Panc1 (cell line): ENCODE measurements at regions of chr1 and their contacts with region 1.

Region 1: GRCh38 chr1:226547754-226548191 is 791 bp upstream of the STUM start:
- DNase-seq: peak; percentile 71
- ATAC-seq: peak; percentile 89
- H3K4me3 ChIP-seq: no peak overlapping the region
- H3K27ac ChIP-seq: no peak overlapping the region
- H3K4me1 ChIP-seq: peaks cover 9% of the 10 kb centered on the region
- H3K27me3 ChIP-seq: peaks cover 29% of the 10 kb centered on the region
- CTCF ChIP-seq: peak; percentile 99

Region 2: DNA sequence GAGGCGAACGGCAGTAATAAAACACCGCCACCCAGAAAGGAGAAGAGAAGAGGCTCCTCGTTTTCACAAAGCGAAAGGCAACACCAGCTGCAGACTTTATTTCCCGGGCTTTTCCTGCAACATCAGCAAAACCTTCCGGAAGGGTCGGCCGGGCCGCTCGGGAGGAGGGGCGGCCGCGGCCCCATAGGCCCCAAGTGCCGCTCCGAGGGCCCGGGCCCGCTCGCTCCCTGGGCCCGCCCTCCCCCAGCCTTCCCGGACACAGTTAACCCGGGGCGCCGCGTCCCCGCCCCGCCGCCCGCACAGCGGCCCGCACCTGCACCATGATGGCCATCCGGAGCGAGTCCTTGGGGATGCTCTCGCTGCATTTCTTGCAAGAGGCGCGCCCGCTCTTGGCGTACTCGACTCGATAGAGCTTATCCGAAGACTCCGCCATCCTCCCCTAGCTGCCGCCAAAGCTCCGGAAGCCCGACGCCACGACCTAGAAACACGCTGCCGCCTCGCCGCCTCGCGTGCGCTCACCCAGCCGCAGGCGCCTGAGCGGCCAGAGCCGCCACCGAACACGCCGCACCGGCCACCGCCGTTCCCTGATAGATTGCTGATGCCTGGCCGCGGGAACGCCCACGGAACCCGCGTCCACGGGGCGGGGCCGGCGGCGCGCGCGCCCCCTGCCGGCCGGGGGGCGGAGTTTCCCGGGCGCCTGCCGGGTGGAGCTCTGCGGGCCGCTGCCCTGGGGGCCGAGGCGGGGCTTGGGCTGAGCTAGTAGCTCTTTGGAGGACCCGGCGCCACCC is 140.1 kb before region 1 on chr1 and contains the start of gene PARP1:
- CTCF ChIA-PET with region 1: interaction called, 10 read pairs
- POLR2A ChIA-PET with region 1: no interaction called
- in situ Hi-C with region 1: no loop called
- intact Hi-C with region 1: no loop called
- DNase-seq: no peak
- ATAC-seq: peak; percentile 94
- H3K4me3 ChIP-seq: peak within 1 kb of the TSS; percentile 76 to 94
- H3K27ac ChIP-seq: peak within 1 kb of the TSS; percentile 84
- H3K4me1 ChIP-seq: peaks cover 25% of the 10 kb centered on the region
- H3K27me3 ChIP-seq: no peaks in the 10 kb centered on the region
- CTCF ChIP-seq: peak; percentile 97
- total RNA-seq, gene PARP1: 127 TPM

Region 3: DNA sequence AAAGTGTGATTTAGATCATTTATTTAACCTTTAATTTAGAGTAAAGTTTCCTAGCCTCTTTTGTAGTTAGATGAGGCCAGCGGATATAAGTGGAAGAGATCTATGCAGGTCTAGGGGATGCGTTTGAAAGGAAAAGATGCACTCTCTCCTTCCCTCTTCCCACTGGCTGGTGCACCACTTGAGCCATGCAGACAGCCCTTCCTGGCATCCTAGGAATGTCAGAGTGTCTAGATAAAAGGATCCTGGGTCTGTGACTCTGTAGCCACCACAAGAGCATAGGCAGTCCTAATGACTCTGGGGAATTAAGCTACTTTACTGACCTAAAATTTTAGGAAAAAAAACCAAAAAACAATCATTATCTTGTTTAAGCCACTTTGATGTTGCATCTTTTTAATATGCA is 15.2 kb before region 1 on chr1:
- CTCF ChIA-PET with region 1: no interaction called
- POLR2A ChIA-PET with region 1: no interaction called
- in situ Hi-C with region 1: no loop called
- intact Hi-C with region 1: no loop called
- DNase-seq: no peak
- ATAC-seq: no peak
- H3K4me3 ChIP-seq: no peak overlapping the region
- H3K27ac ChIP-seq: no peak overlapping the region
- H3K4me1 ChIP-seq: no peaks in the 10 kb centered on the region
- H3K27me3 ChIP-seq: peaks cover 8% of the 10 kb centered on the region; the same call in 1 of the 2 replicates
- CTCF ChIP-seq: no peak

Region 4: DNA sequence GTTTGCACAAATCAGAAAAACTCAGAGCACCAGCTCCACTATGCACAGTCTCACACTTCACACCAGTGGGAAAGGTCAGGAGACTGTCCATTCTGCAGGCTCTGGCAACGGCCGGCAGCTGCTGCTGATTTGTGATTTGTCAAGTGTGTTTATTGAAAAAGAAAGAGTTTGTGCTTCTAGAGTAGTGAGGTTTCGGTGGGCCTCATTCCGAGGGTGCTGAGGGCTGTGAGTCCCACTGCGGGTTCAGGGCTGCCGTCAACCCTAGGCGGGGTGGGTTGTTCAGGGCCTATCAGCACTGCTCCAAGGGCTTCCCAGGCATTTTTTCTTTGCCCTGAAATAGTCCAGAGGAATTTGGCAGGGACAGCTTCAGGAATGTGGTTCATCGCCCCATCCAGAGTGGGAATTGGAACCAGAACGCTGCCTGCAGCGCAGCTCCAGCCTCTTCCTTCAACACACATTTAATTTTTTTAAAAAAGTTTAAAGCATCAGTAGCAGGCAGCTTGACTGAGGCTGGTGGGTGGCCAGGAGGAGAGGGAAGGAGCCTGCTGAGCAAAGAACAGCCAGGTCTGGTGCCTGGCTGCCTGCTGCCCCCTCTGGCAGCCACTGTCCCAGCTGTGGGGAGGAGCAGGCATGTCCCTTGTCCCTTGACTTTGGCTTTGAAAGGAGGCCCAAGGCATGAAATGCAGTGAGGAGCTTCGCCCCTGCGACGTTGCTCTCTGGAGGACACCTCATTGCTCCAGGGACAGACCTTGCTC is 20.5 kb after region 1 on chr1:
- CTCF ChIA-PET with region 1: interaction called, 10 read pairs
- POLR2A ChIA-PET with region 1: no interaction called
- in situ Hi-C with region 1: no loop called
- intact Hi-C with region 1: no loop called
- DNase-seq: no peak
- ATAC-seq: peak; percentile 86
- H3K4me3 ChIP-seq: no peak overlapping the region
- H3K27ac ChIP-seq: no peak overlapping the region
- H3K4me1 ChIP-seq: no peaks in the 10 kb centered on the region
- H3K27me3 ChIP-seq: peaks cover 18% of the 10 kb centered on the region
- CTCF ChIP-seq: peak; percentile 68

Region 5: DNA sequence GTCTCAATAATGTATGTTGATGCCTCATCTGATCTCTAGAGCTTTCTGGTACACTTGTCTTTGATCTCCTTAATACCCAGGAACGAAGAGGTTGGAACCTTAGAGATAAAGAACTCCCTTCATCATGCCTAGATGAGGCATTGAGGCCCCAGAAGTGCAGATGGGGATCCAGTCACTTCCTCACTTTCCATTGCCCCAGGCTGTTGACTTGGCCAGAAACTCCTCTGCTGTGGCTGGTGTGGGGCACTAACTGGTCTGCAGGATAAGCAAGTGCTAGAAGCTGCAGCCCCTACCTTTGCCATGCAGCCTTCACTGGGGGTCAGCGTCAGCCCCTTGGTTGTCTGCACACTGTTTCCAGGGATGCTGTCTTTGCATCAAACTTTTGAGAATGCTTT is 50.7 kb after region 1 on chr1:
- CTCF ChIA-PET with region 1: no interaction called
- POLR2A ChIA-PET with region 1: no interaction called
- in situ Hi-C with region 1: no loop called
- intact Hi-C with region 1: no loop called
- DNase-seq: no peak
- ATAC-seq: no peak
- H3K4me3 ChIP-seq: no peak overlapping the region
- H3K27ac ChIP-seq: no peak overlapping the region
- H3K4me1 ChIP-seq: no peaks in the 10 kb centered on the region
- H3K27me3 ChIP-seq: peaks cover 3% of the 10 kb centered on the region; the same call in 1 of the 2 replicates
- CTCF ChIP-seq: no peak

Region 6: GRCh38 chr1:226608699-226609505 is 61.1 kb after region 1 on chr1:
- CTCF ChIA-PET with region 1: interaction called, 4 read pairs
- POLR2A ChIA-PET with region 1: no interaction called
- in situ Hi-C with region 1: no loop called
- intact Hi-C with region 1: loop called (anchors 5 kb)
- DNase-seq: peak; percentile 27
- ATAC-seq: peak; percentile 71
- H3K4me3 ChIP-seq: no peak overlapping the region
- H3K27ac ChIP-seq: no peak overlapping the region
- H3K4me1 ChIP-seq: no peaks in the 10 kb centered on the region
- H3K27me3 ChIP-seq: peaks cover 8% of the 10 kb centered on the region
- CTCF ChIP-seq: peak; percentile 92

Region 7: GRCh38 chr1:226872437-226872836 is 324.7 kb after region 1 on chr1:
- CTCF ChIA-PET with region 1: interaction called, 16 read pairs
- POLR2A ChIA-PET with region 1: no interaction called
- in situ Hi-C with region 1: no loop called
- intact Hi-C with region 1: no loop called
- DNase-seq: no peak
- ATAC-seq: no peak
- H3K4me3 ChIP-seq: no peak overlapping the region
- H3K27ac ChIP-seq: no peak overlapping the region
- H3K4me1 ChIP-seq: peaks cover 9% of the 10 kb centered on the region
- H3K27me3 ChIP-seq: no peaks in the 10 kb centered on the region
- CTCF ChIP-seq: no peak